CD8-positive, alpha-beta T cell (primary cell): ENCODE measurements at regions of chr6 and their contacts with region 1.

Region 1: GRCh38 chr6:142871910-142872331 is 73.1 kb downstream of the HIVEP2 start:
- DNase-seq: peak in 7 of 9 experiments; percentile 35 to 90 (median 60)
- ATAC-seq: peak; percentile 85
- H3K4me3 ChIP-seq: no peak overlapping the region
- H3K4me3 Mint-ChIP-seq: no peak overlapping the region
- H3K27ac ChIP-seq: peak overlapping the region; percentile 25 to 39
- H3K27ac Mint-ChIP-seq: peak overlapping the region; percentile 93
- H3K4me1 ChIP-seq: peaks cover 70% of the 10 kb centered on the region
- H3K4me1 Mint-ChIP-seq: peaks cover 89% of the 10 kb centered on the region
- H3K27me3 ChIP-seq: no peaks in the 10 kb centered on the region
- H3K27me3 Mint-ChIP-seq: no peaks in the 10 kb centered on the region
- CTCF ChIP-seq: no peak

Region 2: DNA sequence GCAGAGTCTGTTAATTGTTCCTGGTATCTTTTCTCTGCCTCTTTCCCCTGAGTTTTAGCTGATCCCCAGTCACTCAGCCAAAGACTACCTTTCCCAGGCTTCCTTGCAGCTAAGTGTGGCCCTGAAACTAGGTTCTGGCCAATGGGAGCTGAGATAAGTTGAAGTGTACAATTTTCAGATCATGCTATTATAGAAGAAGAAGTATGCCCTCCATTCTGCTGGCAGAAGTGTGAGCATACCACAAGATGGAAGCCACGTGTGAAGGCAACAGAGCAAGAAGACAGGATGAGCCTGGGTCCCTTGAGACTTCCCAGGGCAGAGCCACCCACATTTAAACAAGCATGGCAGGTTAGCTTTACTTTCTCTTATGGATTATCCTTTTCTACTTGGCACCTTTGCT is 200.1 kb before region 1 on chr6:
- CTCF ChIA-PET with region 1: no interaction called
- POLR2A ChIA-PET with region 1: no interaction called
- intact Hi-C with region 1: no loop called
- DNase-seq: peak in 1 of 9 experiments; percentile 22
- ATAC-seq: no peak
- H3K4me3 ChIP-seq: no peak overlapping the region
- H3K4me3 Mint-ChIP-seq: no peak overlapping the region
- H3K27ac ChIP-seq: no peak overlapping the region
- H3K27ac Mint-ChIP-seq: no peak overlapping the region
- H3K4me1 ChIP-seq: no peaks in the 10 kb centered on the region
- H3K4me1 Mint-ChIP-seq: peaks cover 3% of the 10 kb centered on the region
- H3K27me3 ChIP-seq: peaks cover 0 to 3% of the 10 kb centered on the region in 2 experiments
- H3K27me3 Mint-ChIP-seq: peaks cover 2% of the 10 kb centered on the region
- CTCF ChIP-seq: no peak

Region 3: DNA sequence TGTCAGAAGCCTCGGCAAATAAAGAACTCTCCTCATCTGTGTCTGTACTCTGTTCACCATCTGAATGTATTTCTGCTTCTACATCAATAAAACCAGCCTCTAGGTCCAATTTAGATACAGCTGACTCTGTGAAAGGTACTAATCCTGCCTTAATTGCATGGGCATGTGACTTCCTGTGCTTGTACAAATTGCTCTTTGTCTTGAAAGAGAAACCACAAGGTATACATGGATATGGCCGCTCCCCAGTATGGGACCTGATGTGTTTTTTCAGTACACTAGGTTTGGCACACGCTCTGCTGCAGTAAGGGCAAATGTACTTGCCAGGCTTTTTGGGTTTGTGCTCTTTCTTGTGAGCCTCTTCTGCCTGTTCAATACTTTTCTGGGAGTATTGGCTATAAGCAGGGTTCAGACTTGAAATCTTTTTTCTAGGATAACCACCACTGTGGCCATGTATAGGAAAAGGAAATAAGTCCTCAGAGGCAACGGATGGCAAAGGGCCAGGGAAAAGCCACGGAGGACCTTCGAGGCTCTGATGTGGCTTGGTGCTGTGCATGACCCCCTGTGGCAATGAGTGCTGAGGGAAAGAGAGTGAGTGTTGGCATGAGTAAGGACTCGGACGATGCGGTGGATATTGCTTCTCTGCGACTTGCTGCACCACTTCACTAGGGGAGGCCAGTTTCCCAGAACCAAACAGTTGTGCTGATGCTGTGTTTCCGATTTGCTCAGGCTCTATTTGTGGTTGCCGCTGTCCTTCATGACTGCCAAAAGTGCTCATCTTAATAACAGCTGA is 97.9 kb before region 1 on chr6:
- CTCF ChIA-PET with region 1: no interaction called
- POLR2A ChIA-PET with region 1: no interaction called
- intact Hi-C with region 1: loop called in 1 of 2 experiments (anchors 5 kb)
- DNase-seq: peak in 1 of 9 experiments; percentile 20
- ATAC-seq: no peak
- H3K4me3 ChIP-seq: no peak overlapping the region
- H3K4me3 Mint-ChIP-seq: peak overlapping the region; percentile 26
- H3K27ac ChIP-seq: no peak overlapping the region
- H3K27ac Mint-ChIP-seq: peak overlapping the region; percentile 81
- H3K4me1 ChIP-seq: peaks cover 13% of the 10 kb centered on the region
- H3K4me1 Mint-ChIP-seq: peaks cover 37% of the 10 kb centered on the region
- H3K27me3 ChIP-seq: no peaks in the 10 kb centered on the region
- H3K27me3 Mint-ChIP-seq: no peaks in the 10 kb centered on the region
- CTCF ChIP-seq: no peak